ENCODE measurements at regions of chr20 and their contacts with region 1.

Region 1: GRCh38 chr20:2651772-2652723 is at the start of gene NOP56:
- DNase-seq: peak; percentile 78 to 98 (median 94)

Region 2: GRCh38 chr20:2524709-2525506 is 127.1 kb before region 1 on chr20:
- intact Hi-C with region 1: loop called (anchors 5 kb)
- DNase-seq: peak in 40 of 42 donors; percentile 39 to 82 (median 60)

Region 3: DNA sequence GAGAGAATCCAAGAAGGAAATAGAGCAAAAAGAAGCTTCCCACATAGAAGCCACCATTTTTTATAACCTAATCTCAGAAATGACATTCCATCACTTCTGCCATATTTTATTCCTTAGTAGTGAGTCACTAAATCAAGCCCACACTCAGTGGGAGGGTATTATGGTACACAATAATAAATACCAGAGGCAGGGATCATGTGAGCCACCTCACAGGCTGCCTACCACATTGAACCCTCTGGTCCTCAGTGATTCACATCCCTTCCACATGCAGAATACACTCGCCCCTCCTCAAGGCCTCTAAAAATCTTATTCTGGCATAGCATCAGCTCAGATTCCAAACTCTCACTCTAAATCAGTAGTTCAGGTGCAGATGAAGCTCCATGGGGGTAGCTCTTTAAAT is 66.2 kb before region 1 on chr20:
- intact Hi-C with region 1: no loop called
- DNase-seq: peak in 2 of 42 donors; percentile 9 to 15

Measured in head of caudate nucleus (tissue), 42 donors.